Activated naive CD4-positive, alpha-beta T cell treated with anti-CD3 and anti-CD28 coated beads for 36 hours (primary cell): ENCODE measurements at regions of chr1 and their contacts with region 1.

Region 1: DNA sequence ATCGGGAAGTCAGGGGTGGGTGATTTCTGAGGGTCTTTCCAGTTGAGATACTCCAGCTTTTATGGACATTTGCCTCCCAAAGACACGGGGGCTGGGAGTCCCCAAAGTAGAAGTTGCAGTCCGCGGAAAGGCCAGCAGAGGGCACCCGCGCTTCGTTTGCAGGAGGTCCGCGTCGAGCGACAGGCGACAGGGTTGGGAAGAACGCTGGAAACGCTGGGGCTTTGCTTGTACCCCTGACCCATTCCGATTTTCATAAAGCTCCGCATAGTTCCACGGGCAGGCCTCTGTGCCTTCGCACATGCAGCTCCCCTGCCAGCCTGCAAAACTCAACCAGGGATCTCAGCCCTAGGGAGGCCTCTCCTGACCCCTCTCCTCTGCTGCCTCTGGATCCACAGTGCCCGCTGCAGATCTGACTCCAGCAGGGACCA is 44.2 kb upstream of the LAPTM5 start:
- DNase-seq: peak; percentile 88
- H3K4me3 Mint-ChIP-seq: no peak overlapping the region
- H3K27ac Mint-ChIP-seq: no peak overlapping the region
- H3K4me1 Mint-ChIP-seq: peaks cover 3% of the 10 kb centered on the region
- H3K27me3 Mint-ChIP-seq: peaks cover 28% of the 10 kb centered on the region

Region 2: DNA sequence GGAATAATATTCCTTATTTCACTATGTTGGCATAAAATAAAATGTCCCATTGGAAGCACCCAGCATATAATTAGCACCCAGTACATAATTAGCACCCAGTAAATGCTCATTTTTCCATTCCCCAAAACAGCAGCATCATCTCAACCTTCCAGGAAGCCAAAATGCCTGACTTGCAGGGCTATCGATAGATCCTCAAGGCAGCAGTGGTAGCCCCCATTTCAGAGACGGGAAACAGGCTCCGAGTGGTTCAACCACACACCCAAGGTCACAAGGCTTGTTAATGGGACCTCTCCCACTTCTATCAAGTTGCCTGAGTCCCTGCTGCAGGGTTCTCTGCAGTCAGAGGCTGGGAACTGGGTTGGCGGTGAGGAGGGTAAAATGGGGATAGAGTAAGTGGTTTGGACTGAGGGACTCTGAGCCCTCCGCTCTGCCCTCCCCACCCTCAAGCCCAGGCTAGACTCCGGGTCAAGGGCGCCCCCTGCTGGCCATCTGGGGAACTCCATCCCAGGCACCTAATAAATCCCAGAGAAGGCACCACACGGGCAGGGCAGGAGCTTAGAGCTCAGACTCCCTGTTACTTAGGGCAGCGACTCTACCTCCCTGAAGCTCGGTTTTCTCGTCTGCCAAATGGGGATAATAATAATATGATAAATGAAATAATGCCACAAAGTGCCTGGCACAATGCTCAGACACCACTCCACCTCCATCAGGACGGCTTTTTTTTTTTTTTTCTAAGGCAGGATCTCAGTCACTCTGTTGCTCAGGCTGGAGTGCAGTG is 22.3 kb before region 1 on chr1:
- CTCF ChIA-PET with region 1: interaction called, 18 read pairs
- intact Hi-C with region 1: no loop called
- DNase-seq: peak; percentile 96
- H3K4me3 Mint-ChIP-seq: no peak overlapping the region
- H3K27ac Mint-ChIP-seq: no peak overlapping the region
- H3K4me1 Mint-ChIP-seq: peaks cover 11% of the 10 kb centered on the region
- H3K27me3 Mint-ChIP-seq: no peaks in the 10 kb centered on the region

Region 3: GRCh38 chr1:30818568-30819243 is 16.9 kb after region 1 on chr1:
- CTCF ChIA-PET with region 1: interaction called, 11 read pairs
- intact Hi-C with region 1: no loop called
- DNase-seq: no peak
- H3K4me3 Mint-ChIP-seq: no peak overlapping the region
- H3K27ac Mint-ChIP-seq: no peak overlapping the region
- H3K4me1 Mint-ChIP-seq: peaks cover 5% of the 10 kb centered on the region
- H3K27me3 Mint-ChIP-seq: peaks cover 35% of the 10 kb centered on the region

Region 4: GRCh38 chr1:30903343-30904034 is 101.7 kb after region 1 on chr1:
- CTCF ChIA-PET with region 1: interaction called, 177 read pairs
- intact Hi-C with region 1: no loop called
- DNase-seq: no peak
- H3K4me3 Mint-ChIP-seq: no peak overlapping the region
- H3K27ac Mint-ChIP-seq: no peak overlapping the region
- H3K4me1 Mint-ChIP-seq: peaks cover 6% of the 10 kb centered on the region
- H3K27me3 Mint-ChIP-seq: peaks cover 17% of the 10 kb centered on the region

Region 5: DNA sequence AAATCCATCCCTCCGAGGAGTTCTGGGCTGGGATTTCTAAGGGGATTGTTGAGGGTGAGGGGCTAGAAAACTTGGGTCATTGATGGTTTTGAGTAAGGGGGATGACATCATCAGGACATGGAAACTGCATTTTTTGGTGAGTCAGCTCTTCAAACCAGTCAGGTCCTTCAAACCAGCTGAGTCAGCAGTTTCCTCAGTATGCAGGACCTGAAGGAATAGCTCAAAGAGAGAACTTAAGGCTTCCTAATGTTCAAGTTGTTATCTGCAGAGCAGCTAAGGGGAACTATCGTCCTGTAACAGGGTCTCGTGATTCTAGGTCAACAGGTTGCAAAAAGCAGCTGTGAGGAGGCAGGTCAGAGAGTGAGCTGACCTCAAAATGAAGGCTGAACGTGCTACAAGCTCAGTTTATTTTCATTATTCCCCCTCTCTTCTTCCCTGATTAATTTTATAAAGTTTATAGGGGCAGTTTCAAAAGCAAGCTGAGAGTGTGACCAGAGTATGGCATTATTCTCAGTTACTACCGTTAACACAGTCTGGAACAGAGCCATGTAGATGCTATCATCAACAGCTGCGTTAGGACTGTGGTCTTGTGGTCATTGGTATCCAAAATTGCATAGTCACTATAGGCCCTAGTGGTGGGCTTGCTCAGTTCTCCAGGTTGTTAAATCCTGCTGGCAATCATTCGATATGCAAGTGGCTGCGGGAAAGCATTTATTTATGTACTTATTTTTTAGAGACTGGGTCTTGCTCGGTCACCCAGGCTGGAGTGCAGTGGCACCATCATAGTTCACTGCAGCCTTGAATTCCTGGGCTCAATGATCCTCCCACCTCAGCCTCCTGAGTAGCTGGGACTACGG is 117.5 kb after region 1 on chr1:
- CTCF ChIA-PET with region 1: interaction called, 177 read pairs
- intact Hi-C with region 1: no loop called
- DNase-seq: no peak
- H3K4me3 Mint-ChIP-seq: no peak overlapping the region
- H3K27ac Mint-ChIP-seq: no peak overlapping the region
- H3K4me1 Mint-ChIP-seq: peaks cover 3% of the 10 kb centered on the region
- H3K27me3 Mint-ChIP-seq: peaks cover 4% of the 10 kb centered on the region

Region 6: GRCh38 chr1:31548907-31549808 is 747.4 kb after region 1 on chr1:
- CTCF ChIA-PET with region 1: no interaction called
- intact Hi-C with region 1: loop called (anchors 5 kb)
- DNase-seq: peak; percentile 95
- H3K4me3 Mint-ChIP-seq: peak overlapping the region; percentile 64
- H3K27ac Mint-ChIP-seq: no peak overlapping the region
- H3K4me1 Mint-ChIP-seq: peaks cover 9% of the 10 kb centered on the region
- H3K27me3 Mint-ChIP-seq: peaks cover 13% of the 10 kb centered on the region